Prostate gland (tissue), 2 donors: ENCODE measurements at regions of chr6 and their contacts with region 1.

Region 1: GRCh38 chr6:51959744-51960383 is 127.5 kb downstream of the PKHD1 start:
- DNase-seq: peak; percentile 44
- H3K4me3 ChIP-seq: no peak overlapping the region
- H3K27ac ChIP-seq: peak overlapping the region in 1 of 2 donors; percentile 22
- H3K4me1 ChIP-seq: no peaks in the 10 kb centered on the region
- H3K27me3 ChIP-seq: no peaks in the 10 kb centered on the region
- CTCF ChIP-seq: peak in 3 of 4 experiments; percentile 56 to 63 (median 62)
- POLR2A ChIP-seq: no peak

Region 2: GRCh38 chr6:51855310-51856082 is 104.4 kb before region 1 on chr6:
- intact Hi-C with region 1: loop called (anchors 10 kb)
- DNase-seq: peak; percentile 36
- H3K4me3 ChIP-seq: no peak overlapping the region
- H3K27ac ChIP-seq: no peak overlapping the region
- H3K4me1 ChIP-seq: no peaks in the 10 kb centered on the region
- H3K27me3 ChIP-seq: no peaks in the 10 kb centered on the region
- CTCF ChIP-seq: peak; percentile 39 to 71 (median 60)
- POLR2A ChIP-seq: no peak

Region 3: DNA sequence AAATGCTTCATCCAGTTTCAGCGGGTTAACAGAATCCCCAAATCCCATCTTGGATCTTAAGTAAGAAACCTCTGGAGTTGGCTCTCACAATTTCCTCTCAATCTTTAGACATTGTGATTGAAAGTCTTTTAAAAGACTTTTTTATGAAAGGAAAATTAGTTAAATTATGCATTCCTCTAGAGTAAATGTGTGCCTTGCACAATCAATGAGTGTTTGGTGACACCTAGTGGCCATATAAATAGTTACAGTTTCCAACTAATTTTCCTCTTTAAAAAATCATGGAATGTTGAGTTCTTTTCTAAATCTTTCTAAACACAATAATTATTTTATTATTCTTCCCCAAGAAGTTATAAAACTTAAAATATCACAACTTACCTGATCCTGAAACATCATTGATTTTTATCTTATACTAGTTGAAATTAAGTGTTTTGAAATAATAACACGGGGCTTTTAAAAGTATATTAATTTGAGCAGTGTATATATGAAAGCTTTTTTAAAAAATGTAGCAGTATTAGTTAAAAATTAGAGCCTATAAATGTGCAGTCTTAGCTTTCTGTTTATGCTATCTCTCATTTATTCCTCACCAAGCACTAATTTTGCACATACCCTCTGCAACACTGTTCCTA is 61.2 kb after region 1 on chr6:
- intact Hi-C with region 1: loop called (anchors 10 kb)
- DNase-seq: no peak
- H3K4me3 ChIP-seq: no peak overlapping the region
- H3K27ac ChIP-seq: no peak overlapping the region
- H3K4me1 ChIP-seq: no peaks in the 10 kb centered on the region
- H3K27me3 ChIP-seq: no peaks in the 10 kb centered on the region
- CTCF ChIP-seq: peak; percentile 75 to 89 (median 84)
- POLR2A ChIP-seq: no peak